ENCODE measurements at regions of chr18 and their contacts with region 1.

Region 1: DNA sequence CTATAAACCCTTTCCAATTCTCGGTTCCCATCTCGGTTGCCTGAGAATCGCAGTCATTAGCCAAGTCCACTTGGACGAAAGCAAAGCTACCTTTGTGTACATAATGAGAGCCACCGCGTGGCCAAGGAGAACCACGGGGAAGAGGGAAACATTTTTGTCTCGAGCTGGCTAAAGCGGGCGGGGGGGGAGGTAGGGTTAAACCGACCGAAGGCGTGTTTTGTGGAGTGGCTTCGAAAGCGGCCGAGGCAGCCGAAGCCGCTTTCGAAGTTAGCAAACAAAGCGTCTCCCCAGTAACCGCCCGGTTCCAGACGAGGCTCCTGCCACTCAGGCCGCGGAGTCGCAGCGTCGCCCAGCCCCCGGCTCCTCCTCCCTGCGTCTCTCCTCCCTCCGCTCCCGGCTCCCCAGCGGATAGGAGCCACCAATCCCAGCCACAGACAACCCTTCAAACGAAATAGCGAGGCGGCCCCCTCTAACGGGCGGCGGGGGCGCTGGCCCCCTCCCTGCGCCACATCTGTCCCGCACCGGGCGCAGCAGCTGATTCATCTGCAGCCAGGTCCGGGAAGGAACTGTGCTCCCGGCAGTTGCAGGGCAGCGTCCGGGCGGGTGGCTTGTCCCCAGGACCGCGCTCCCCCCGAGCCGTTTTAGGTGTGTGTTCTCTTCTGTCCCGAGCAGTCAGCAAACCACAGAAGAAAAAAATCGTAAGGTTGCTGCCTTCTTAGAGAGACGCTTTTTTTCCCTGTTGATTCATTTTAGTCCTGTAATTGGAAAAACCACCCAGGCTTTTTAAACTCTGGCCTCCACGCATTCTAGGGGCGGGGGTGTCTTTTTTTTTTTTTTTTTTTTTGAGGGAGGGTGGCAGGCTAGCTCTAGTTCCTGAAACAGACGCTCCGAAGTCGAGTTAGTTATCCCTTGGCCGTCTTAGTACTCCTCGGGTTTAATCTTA is 1.8 kb upstream of the TGIF1 start:
- DNase-seq: peak; percentile 73 to 89 (median 84)
- ATAC-seq: peak; percentile 73
- H3K4me3 ChIP-seq: peak overlapping the region; percentile 78
- H3K4me3 Mint-ChIP-seq: peak overlapping the region; percentile 85 to 97 (median 96)
- H3K27ac ChIP-seq: peak overlapping the region; percentile 96
- H3K27ac Mint-ChIP-seq: peak overlapping the region; percentile 96 to 100 (median 99)
- H3K4me1 ChIP-seq: peaks cover 13% of the 10 kb centered on the region in 2 donors
- H3K4me1 Mint-ChIP-seq: peaks cover 5 to 35% (median 23%) of the 10 kb centered on the region in 7 donors
- H3K27me3 ChIP-seq: no peaks in the 10 kb centered on the region
- H3K27me3 Mint-ChIP-seq: peaks cover 0 to 1% (median 0%) of the 10 kb centered on the region in 5 donors

Region 2: GRCh38 chr18:2636126-2636631 is 812.0 kb before region 1 on chr18:
- CTCF ChIA-PET with region 1: no interaction called
- POLR2A ChIA-PET with region 1: interaction called, 9 read pairs
- intact Hi-C with region 1: loop called (anchors 2 kb)
- DNase-seq: no peak
- ATAC-seq: peak; percentile 47
- H3K4me3 ChIP-seq: peak overlapping the region; percentile 46
- H3K4me3 Mint-ChIP-seq: peak overlapping the region in 9 of 10 donors; percentile 68 to 93 (median 86)
- H3K27ac ChIP-seq: peak overlapping the region; percentile 83
- H3K27ac Mint-ChIP-seq: peak overlapping the region in 6 of 9 donors; percentile 98 to 100 (median 100)
- H3K4me1 ChIP-seq: peaks cover 65 to 74% of the 10 kb centered on the region in 2 donors
- H3K4me1 Mint-ChIP-seq: peaks cover 0 to 100% (median 79%) of the 10 kb centered on the region in 7 donors
- H3K27me3 ChIP-seq: no peaks in the 10 kb centered on the region
- H3K27me3 Mint-ChIP-seq: no peaks in the 10 kb centered on the region

Region 3: DNA sequence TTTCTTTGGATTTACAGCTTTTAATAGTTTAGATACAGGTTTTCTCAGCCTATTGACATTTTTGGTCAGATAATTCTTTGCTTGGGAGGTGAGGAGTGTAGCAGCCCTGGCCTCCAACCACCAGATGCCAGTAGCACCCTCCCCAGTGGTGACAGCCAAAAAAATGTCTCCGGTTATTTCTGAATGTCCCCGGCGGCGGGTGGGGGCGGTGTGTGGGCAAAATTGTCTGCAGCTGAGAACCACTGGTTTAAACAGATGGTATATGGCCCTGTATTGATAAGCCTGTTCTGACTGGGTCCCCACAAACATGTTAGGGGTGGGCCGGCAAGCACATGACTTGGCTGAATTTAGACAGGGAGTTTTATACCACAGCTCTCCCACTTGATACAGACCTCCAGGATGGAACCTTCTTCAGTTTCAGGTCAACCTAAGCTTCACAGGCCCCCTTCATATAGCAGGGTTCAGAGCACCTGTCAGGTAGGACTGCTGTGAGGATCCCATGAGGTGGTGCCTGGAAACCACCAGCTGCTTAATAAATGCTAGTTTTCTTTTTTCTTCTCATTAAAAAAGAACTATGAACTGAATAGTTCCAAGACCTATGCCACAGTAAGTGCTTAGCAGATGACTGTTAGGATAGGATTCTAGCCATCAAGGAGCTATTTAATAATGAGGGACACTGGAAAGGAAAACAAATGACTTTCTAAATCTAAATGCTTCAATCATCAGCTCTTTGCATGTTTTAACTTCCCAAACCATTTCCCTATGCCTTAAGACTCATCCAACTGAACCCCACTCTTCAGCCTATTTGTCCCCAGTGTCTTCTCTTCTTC is 453.3 kb before region 1 on chr18:
- CTCF ChIA-PET with region 1: interaction called, 5 read pairs
- POLR2A ChIA-PET with region 1: interaction called, 3 read pairs
- intact Hi-C with region 1: loop called in 1 of 2 experiments (anchors 10 kb)
- DNase-seq: peak; percentile 57 to 83 (median 77)
- ATAC-seq: peak; percentile 92
- H3K4me3 ChIP-seq: peak overlapping the region; percentile 35
- H3K4me3 Mint-ChIP-seq: peak overlapping the region; percentile 41 to 80 (median 68)
- H3K27ac ChIP-seq: peak overlapping the region; percentile 62
- H3K27ac Mint-ChIP-seq: peak overlapping the region; percentile 54 to 91 (median 84)
- H3K4me1 ChIP-seq: peaks cover 38 to 47% of the 10 kb centered on the region in 2 donors
- H3K4me1 Mint-ChIP-seq: peaks cover 48 to 87% (median 83%) of the 10 kb centered on the region in 7 donors
- H3K27me3 ChIP-seq: no peaks in the 10 kb centered on the region
- H3K27me3 Mint-ChIP-seq: no peaks in the 10 kb centered on the region

Region 4: DNA sequence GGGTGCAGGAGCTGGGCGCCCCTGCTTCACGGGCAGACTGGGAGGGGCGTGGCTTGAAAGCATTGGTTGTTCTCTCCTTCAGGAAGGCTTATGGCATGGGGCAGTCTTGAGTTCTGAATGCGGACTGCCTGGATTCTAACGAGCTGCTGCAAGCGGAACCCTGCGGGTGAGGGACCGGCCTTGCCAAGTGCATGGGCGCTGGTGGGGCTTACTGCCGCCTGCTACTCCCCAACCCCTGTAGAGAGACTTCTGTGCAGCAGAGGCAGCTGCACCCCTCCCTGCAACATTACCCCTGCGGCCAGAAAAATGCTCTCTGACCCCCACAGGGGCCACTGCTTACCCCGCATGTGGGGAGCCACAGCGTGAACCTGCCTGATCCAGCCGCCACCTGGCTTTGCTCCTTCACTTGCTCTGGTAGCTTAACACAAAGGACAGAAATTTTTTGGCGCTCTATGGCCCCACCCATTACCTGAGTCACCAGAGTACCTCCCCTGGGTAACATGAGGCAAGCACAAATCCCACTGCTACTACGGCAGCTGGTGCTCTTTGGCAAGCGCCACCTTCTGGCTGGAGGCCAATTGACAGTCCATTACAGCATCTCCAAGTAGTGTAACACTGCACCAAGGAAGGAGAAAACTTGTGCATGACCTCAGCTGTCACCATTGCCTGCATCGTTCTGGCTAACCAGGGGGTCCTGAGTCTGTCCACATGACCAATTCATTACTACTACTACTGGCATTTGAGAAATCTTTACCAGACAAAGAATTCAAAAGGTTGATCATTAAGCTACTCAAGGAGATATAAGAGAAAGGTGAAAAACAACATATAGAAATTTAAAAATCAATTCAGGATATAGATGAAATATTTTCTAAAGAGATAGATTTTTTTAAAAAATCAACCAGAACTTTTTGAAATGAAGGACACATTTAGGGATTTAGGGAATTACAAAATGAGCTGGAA is 150.9 kb before region 1 on chr18:
- CTCF ChIA-PET with region 1: interaction called, 3 read pairs
- POLR2A ChIA-PET with region 1: interaction called, 24 read pairs
- intact Hi-C with region 1: loop called in 1 of 2 experiments (anchors 1 kb)
- DNase-seq: peak; percentile 74 to 93 (median 90)
- ATAC-seq: peak; percentile 100
- H3K4me3 ChIP-seq: peak overlapping the region; percentile 60
- H3K4me3 Mint-ChIP-seq: peak overlapping the region; percentile 89 to 98 (median 95)
- H3K27ac ChIP-seq: peak overlapping the region; percentile 62
- H3K27ac Mint-ChIP-seq: peak overlapping the region; percentile 21 to 93 (median 84)
- H3K4me1 ChIP-seq: peaks cover 6 to 9% of the 10 kb centered on the region in 2 donors
- H3K4me1 Mint-ChIP-seq: peaks cover 0 to 16% (median 10%) of the 10 kb centered on the region in 7 donors
- H3K27me3 ChIP-seq: no peaks in the 10 kb centered on the region
- H3K27me3 Mint-ChIP-seq: peaks cover 13 to 41% (median 30%) of the 10 kb centered on the region in 5 donors

Region 5: GRCh38 chr18:3466045-3466444 is 17.9 kb after region 1 on chr18:
- CTCF ChIA-PET with region 1: interaction called, 24 read pairs
- POLR2A ChIA-PET with region 1: interaction called, 50 read pairs
- intact Hi-C with region 1: no loop called
- DNase-seq: no peak
- ATAC-seq: no peak
- H3K4me3 ChIP-seq: no peak overlapping the region
- H3K4me3 Mint-ChIP-seq: peak overlapping the region in 1 of 10 donors; percentile 16
- H3K27ac ChIP-seq: no peak overlapping the region
- H3K27ac Mint-ChIP-seq: peak overlapping the region in 6 of 9 donors; percentile 3 to 70 (median 47)
- H3K4me1 ChIP-seq: peaks cover 11 to 15% of the 10 kb centered on the region in 2 donors
- H3K4me1 Mint-ChIP-seq: peaks cover 9 to 23% (median 21%) of the 10 kb centered on the region in 7 donors
- H3K27me3 ChIP-seq: no peaks in the 10 kb centered on the region
- H3K27me3 Mint-ChIP-seq: no peaks in the 10 kb centered on the region

Region 6: DNA sequence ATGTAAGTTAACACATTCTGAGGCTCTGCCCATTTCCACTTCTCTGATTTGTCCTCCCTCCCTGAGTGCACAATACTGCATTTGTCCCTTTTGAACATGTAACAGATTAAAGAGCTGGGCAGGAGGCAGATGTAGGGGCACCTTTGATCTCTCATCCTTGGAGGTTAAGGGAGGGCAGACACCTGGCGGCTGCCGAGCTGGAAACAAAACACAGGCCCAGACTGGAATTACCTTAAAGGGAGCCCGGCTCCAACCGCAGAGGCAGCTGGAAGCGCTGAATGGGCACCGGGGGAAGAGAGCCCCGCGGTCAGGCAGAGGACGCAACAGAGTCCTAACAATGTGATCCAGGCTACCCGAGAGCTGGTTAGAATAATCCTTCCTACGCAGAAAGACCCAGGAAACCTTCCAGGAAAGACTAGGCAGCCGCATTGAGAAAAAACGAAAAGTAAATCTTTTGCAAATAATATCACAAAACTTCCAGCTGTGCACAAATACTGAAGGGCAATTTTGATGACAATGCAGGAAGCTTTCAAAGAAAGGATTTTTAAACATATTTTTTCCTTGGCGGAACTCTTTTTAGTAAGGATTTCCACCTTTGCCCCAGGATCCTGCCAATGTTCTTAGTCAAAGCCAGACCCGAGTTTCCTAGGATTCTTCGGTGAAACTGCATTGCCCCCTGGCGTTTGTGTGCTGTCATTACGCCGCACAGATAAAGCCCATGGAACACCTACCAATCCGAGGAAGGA is 217.8 kb after region 1 on chr18:
- CTCF ChIA-PET with region 1: interaction called, 46 read pairs
- POLR2A ChIA-PET with region 1: interaction called, 3 read pairs
- intact Hi-C with region 1: no loop called
- DNase-seq: peak; percentile 33 to 78 (median 60)
- ATAC-seq: peak; percentile 84
- H3K4me3 ChIP-seq: no peak overlapping the region
- H3K4me3 Mint-ChIP-seq: peak overlapping the region in 9 of 10 donors; percentile 38 to 62 (median 50)
- H3K27ac ChIP-seq: no peak overlapping the region
- H3K27ac Mint-ChIP-seq: peak overlapping the region in 2 of 9 donors; percentile 31 to 84
- H3K4me1 ChIP-seq: no peaks in the 10 kb centered on the region
- H3K4me1 Mint-ChIP-seq: peaks cover 0 to 26% (median 8%) of the 10 kb centered on the region in 7 donors
- H3K27me3 ChIP-seq: no peaks in the 10 kb centered on the region
- H3K27me3 Mint-ChIP-seq: peaks cover 0 to 5% (median 0%) of the 10 kb centered on the region in 5 donors

Region 7: DNA sequence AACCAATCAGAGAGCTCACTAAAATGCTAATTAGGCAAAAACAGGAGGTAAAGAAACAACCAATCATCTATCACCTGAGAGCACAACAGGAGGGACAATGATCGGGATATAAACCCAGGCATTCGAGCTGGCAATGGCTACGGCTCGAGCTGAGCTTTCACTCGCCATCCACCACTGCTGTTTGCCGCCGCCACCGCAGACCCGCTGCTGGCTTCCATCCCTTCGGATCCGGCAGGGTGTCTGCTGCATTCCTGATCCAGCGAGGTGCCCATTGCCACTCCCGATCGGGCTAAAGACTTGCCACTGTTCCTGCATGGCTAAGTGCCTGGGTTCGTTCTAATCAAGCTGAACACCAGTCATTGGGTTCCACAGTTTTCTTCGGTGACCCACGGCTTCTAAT is 1243.7 kb after region 1 on chr18:
- CTCF ChIA-PET with region 1: no interaction called
- POLR2A ChIA-PET with region 1: no interaction called
- intact Hi-C with region 1: no loop called
- DNase-seq: no peak
- ATAC-seq: no peak
- H3K4me3 ChIP-seq: no peak overlapping the region
- H3K4me3 Mint-ChIP-seq: no peak overlapping the region
- H3K27ac ChIP-seq: no peak overlapping the region
- H3K27ac Mint-ChIP-seq: no peak overlapping the region
- H3K4me1 ChIP-seq: no peaks in the 10 kb centered on the region
- H3K4me1 Mint-ChIP-seq: no peaks in the 10 kb centered on the region
- H3K27me3 ChIP-seq: no peaks in the 10 kb centered on the region
- H3K27me3 Mint-ChIP-seq: no peaks in the 10 kb centered on the region